Adrenal gland (tissue), 19 donors: ENCODE measurements at regions of chr4 and their contacts with region 1.

Region 1: DNA sequence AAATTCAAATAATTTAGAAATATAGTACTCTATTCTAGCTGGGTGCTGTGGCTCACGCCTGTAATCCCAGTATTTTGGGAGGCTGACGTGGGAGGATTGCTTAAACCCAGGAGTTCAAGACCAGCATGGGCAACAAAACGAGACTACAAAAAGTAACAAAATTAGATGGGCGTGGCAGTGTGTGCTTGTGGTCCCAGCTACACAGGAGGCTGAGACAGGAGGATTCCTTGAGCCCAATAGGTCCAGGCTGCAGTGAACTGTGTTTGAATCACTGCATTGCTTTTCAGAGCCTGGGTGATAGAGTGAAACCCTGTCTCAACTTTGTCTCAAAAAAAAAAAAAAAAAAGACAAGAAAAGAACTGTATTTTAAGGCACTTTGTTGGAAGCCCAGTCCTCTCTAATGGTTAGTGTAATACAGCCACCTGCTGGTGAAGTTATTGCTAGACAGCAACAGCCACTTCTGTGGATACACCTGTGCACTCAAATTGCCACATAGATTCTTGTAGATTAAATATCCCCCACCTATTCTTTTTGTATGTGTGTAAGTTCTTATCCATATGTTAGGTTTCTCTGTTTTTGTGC is 10.1 kb upstream of the FGG start:
- DNase-seq: peak in 2 of 7 donors; percentile 11 to 18
- H3K4me3 ChIP-seq: no peak overlapping the region
- H3K27ac ChIP-seq: no peak overlapping the region
- H3K4me1 ChIP-seq: peaks cover 0 to 7% of the 10 kb centered on the region in 2 donors
- H3K27me3 ChIP-seq: peaks cover 8% of the 10 kb centered on the region
- CTCF ChIP-seq: peak; percentile 22 to 56 (median 41)
- POLR2A ChIP-seq: no peak

Region 2: DNA sequence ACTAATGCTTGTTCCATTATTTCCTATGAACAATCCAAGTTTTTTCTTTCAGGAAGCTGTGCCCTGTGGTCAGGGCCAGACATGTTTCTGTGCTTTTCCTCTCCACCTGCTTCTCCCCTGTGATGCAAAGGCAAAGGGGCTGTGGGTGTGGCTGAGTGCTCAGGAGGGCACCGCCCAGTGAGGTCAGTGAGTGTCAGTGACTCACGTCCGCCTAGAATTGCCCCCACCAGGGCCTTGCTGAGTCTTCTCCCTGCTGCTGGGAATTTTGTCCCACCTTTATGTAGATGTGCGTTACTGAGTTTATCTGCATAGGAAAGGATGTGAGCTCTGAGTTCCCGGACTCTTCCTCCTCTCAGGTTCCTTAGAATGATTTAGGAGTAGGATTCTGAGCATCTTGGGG is 414.1 kb before region 1 on chr4:
- intact Hi-C with region 1: no loop called
- DNase-seq: no peak
- H3K4me3 ChIP-seq: no peak overlapping the region
- H3K27ac ChIP-seq: no peak overlapping the region
- H3K4me1 ChIP-seq: no peaks in the 10 kb centered on the region
- H3K27me3 ChIP-seq: no peaks in the 10 kb centered on the region
- CTCF ChIP-seq: no peak
- POLR2A ChIP-seq: no peak

Region 3: GRCh38 chr4:154551872-154552686 is 70.4 kb before region 1 on chr4:
- intact Hi-C with region 1: loop called (anchors 5 kb)
- DNase-seq: peak; percentile 67 to 92 (median 81)
- H3K4me3 ChIP-seq: no peak overlapping the region
- H3K27ac ChIP-seq: no peak overlapping the region
- H3K4me1 ChIP-seq: peaks cover 6 to 18% of the 10 kb centered on the region in 2 donors
- H3K27me3 ChIP-seq: no peaks in the 10 kb centered on the region
- CTCF ChIP-seq: peak; percentile 47 to 83 (median 67)
- POLR2A ChIP-seq: no peak

Region 4: GRCh38 chr4:154559494-154560418 is 62.8 kb before region 1 on chr4:
- intact Hi-C with region 1: loop called (anchors 5 kb)
- DNase-seq: peak in 1 of 7 donors; percentile 10
- H3K4me3 ChIP-seq: no peak overlapping the region
- H3K27ac ChIP-seq: no peak overlapping the region
- H3K4me1 ChIP-seq: no peaks in the 10 kb centered on the region
- H3K27me3 ChIP-seq: no peaks in the 10 kb centered on the region
- CTCF ChIP-seq: peak in 5 of 6 experiments; percentile 26 to 53 (median 44)
- POLR2A ChIP-seq: no peak